HEK293T (cell line): ENCODE measurements at regions of chr9 and their contacts with region 1.

Region 1: DNA sequence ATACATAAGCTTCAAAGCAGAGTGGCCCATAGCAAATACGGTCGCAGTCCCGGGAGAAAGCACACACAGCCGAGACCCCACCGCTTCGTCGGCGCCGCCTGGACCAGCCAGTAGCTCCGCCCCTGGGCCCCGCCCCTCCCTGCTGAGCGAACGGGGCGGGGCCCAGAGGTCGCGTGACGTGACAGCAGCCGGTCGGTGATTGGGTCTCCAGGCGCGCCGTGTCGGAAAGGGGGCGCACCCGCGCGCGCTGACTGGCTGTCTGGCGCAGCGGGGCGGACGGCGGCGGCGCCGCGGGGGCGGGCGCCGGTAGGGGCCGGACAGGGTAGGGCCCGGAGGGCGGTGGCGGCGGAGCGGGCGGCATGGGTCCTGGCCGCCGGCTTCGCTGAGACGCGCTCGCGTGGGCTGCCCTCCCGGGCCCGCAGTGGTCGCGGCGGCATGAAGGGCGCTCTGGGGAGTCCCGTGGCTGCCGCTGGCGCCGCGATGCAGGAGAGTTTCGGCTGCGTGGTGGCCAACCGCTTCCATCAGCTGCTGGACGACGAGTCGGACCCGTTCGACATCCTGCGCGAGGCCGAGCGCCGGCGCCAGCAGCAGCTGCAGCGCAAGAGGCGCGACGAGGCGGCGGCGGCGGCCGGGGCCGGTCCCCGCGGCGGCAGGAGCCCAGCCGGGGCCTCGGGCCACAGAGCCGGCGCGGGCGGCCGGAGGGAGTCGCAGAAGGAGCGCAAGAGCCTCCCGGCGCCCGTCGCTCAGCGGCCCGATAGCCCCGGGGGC is at the start of gene HABP4:
- DNase-seq: peak; percentile 95

Region 2: GRCh38 chr9:96418074-96418809 is 31.8 kb before region 1 on chr9 and contains the start of gene ZNF367:
- CTCF ChIA-PET with region 1: interaction called, 3 read pairs
- POLR2A ChIA-PET with region 1: interaction called, 11 read pairs
- DNase-seq: peak; percentile 90

Region 3: GRCh38 chr9:96464426-96464825 is 14.4 kb after region 1 on chr9:
- CTCF ChIA-PET with region 1: no interaction called
- POLR2A ChIA-PET with region 1: no interaction called
- DNase-seq: no peak

Region 4: GRCh38 chr9:96478829-96479371 is 28.9 kb after region 1 on chr9:
- CTCF ChIA-PET with region 1: interaction called, 10 read pairs
- POLR2A ChIA-PET with region 1: interaction called, 3 read pairs
- DNase-seq: no peak